ENCODE measurements at regions of chr5 and their contacts with region 1.

Region 1: DNA sequence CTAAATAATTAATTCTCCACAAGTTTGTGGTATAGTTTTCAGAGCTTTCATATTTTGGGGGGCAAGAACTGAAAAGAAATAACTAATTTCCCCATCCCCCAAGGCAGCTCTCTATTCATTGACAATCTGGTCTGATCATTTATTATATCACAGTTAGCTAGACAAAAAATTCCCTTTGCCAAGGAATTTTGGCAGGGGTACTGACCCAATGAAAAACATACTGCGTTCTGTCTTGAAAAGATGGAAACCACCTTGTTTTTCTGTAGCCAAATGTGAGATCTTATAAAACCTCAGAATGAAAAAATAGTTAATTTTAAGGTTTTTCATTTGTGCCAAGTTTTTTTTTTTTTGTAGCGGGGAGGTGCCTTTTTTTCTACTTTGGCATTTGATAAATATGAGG is 1008.9 kb downstream of the EFNA5 start:
- DNase-seq: no peak
- ATAC-seq: no peak
- H3K4me3 ChIP-seq: no peak overlapping the region
- H3K27ac ChIP-seq: no peak overlapping the region
- H3K4me1 ChIP-seq: no peaks in the 10 kb centered on the region
- H3K27me3 ChIP-seq: no peaks in the 10 kb centered on the region
- CTCF ChIP-seq: no peak

Region 2: GRCh38 chr5:105529851-105530250 is 1132.0 kb before region 1 on chr5:
- CTCF ChIA-PET with region 1: no interaction called
- POLR2A ChIA-PET with region 1: interaction called, 16 read pairs
- in situ Hi-C with region 1: no loop called
- intact Hi-C with region 1: no loop called
- DNase-seq: no peak
- ATAC-seq: no peak
- H3K4me3 ChIP-seq: no peak overlapping the region
- H3K27ac ChIP-seq: no peak overlapping the region
- H3K4me1 ChIP-seq: no peaks in the 10 kb centered on the region
- H3K27me3 ChIP-seq: no peaks in the 10 kb centered on the region
- CTCF ChIP-seq: no peak

Measured in Panc1 (cell line).